CD4-positive, alpha-beta memory T cell (primary cell): ENCODE measurements at regions of chr20 and their contacts with region 1.

Region 1: DNA sequence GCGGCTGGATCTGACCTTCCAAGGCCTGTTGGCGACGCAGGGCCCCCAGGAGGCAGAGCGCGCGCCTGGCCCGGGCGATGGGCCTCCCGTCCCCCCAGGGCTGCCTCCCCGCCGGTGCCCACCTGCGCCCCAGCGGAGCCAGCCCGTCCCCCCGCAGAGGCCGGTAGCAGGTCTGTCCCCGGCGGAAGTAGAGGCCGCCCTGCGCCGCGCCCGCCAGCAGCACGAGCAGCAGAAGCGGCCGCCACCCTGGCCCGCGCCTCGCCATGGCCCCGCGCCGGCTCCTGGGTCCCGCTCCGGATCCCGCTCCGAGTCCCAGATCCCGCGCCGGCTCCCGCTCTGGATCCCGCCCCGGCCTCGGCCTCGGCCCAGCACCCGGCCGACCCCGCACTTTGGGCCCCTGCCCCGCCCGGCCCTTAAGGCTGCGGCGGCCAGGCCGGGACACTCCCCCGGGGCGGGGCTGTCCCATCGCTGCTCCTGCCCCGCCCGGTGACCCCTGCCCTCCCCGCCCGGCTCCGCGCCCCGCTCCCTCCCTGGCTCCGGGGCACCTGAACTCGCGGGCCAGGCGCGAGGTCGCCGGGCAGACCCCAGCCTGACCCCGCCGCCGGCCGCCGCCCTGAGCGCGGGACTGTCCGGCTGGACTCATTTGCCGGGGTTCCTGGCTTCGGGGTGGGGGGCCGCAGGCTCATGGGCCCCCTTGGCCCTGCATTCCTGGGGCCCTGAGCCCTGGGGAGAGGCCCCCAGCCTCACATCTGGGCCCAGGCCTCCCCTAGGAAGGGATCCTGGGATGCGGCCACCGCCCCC is at the start of gene CTSZ:
- DNase-seq: peak in 3 of 5 donors; percentile 18 to 53 (median 36)
- H3K4me3 ChIP-seq: peak within 1 kb of the TSS; percentile 3 to 52
- H3K4me3 Mint-ChIP-seq: peak within 1 kb of the TSS; percentile 72 to 86 (median 81)
- H3K27ac ChIP-seq: peak within 1 kb of the TSS; percentile 62
- H3K27ac Mint-ChIP-seq: peak within 1 kb of the TSS in 5 of 7 donors; percentile 29 to 89 (median 68)
- H3K4me1 ChIP-seq: peaks cover 37% of the 10 kb centered on the region
- H3K4me1 Mint-ChIP-seq: peaks cover 27 to 54% (median 36%) of the 10 kb centered on the region in 4 donors
- H3K27me3 ChIP-seq: no peaks in the 10 kb centered on the region
- H3K27me3 Mint-ChIP-seq: no peaks in the 10 kb centered on the region
- total RNA-seq, gene CTSZ: 34.8 to 37.3 TPM

Region 2: DNA sequence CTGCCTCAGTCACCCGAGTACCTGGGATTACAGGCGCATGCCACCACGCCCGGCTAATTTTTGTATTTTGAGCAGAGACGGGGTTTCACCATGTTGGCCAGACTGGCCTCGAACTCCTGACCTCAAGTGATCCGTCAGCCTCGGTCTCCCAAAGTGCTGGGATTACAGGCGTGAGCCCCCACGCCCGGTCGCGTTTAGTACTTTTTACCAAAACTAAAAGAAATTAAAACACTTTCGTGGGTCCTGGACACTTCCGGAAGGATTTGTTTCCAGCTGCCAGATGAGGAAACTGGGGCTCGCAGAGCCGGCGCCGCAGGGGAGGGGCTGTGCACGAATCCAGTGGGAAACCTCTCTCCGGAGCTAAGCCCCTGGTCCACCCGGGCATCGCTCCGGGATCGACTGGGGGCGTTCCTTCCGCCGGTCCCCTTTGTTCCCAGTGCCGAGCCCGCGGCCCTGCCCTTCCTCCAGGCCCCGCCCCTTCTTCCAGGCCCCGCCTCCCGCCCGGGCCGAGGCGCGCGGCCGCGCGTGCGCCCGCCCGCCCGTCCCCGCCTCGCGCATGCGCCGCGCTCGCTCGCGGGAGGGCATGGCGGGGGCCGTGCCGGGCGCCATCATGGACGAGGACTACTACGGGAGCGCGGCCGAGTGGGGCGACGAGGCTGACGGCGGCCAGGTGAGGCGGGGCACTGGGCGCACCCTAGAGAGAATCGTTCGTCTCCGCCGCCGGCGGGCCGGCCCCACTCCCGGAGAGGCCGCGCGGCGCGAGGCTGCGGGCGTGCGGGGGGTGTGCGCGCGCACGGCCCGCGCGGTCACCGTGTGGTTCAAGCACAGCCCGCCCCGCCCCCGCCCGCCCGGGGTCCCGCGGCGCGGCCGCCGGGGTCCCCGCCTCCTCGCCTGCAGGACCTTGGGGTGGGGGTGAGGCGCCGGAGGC is 26.1 kb before region 1 on chr20 and contains the start of gene NELFCD:
- CTCF ChIA-PET with region 1: no interaction called
- POLR2A ChIA-PET with region 1: interaction called, 6 read pairs
- intact Hi-C with region 1: loop called (anchors 2 kb)
- DNase-seq: peak; percentile 84 to 90 (median 88)
- H3K4me3 ChIP-seq: peak within 1 kb of the TSS; percentile 82 to 95
- H3K4me3 Mint-ChIP-seq: peak within 1 kb of the TSS; percentile 91 to 97 (median 94)
- H3K27ac ChIP-seq: peak within 1 kb of the TSS; percentile 66
- H3K27ac Mint-ChIP-seq: peak within 1 kb of the TSS; percentile 72 to 97 (median 93)
- H3K4me1 ChIP-seq: peaks cover 41% of the 10 kb centered on the region
- H3K4me1 Mint-ChIP-seq: peaks cover 29 to 39% (median 33%) of the 10 kb centered on the region in 4 donors
- H3K27me3 ChIP-seq: no peaks in the 10 kb centered on the region
- H3K27me3 Mint-ChIP-seq: no peaks in the 10 kb centered on the region
- total RNA-seq, gene NELFCD: 77.6 to 93.3 TPM